ENCODE measurements at regions of chr20 and their contacts with region 1.

Region 1: GRCh38 chr20:47379433-47380150 is 23.1 kb upstream of the ZMYND8 start:
- DNase-seq: no peak
- H3K4me3 Mint-ChIP-seq: no peak overlapping the region
- H3K27ac Mint-ChIP-seq: peak overlapping the region; percentile 82
- H3K4me1 Mint-ChIP-seq: peaks cover 28% of the 10 kb centered on the region
- H3K27me3 Mint-ChIP-seq: no peaks in the 10 kb centered on the region

Region 2: DNA sequence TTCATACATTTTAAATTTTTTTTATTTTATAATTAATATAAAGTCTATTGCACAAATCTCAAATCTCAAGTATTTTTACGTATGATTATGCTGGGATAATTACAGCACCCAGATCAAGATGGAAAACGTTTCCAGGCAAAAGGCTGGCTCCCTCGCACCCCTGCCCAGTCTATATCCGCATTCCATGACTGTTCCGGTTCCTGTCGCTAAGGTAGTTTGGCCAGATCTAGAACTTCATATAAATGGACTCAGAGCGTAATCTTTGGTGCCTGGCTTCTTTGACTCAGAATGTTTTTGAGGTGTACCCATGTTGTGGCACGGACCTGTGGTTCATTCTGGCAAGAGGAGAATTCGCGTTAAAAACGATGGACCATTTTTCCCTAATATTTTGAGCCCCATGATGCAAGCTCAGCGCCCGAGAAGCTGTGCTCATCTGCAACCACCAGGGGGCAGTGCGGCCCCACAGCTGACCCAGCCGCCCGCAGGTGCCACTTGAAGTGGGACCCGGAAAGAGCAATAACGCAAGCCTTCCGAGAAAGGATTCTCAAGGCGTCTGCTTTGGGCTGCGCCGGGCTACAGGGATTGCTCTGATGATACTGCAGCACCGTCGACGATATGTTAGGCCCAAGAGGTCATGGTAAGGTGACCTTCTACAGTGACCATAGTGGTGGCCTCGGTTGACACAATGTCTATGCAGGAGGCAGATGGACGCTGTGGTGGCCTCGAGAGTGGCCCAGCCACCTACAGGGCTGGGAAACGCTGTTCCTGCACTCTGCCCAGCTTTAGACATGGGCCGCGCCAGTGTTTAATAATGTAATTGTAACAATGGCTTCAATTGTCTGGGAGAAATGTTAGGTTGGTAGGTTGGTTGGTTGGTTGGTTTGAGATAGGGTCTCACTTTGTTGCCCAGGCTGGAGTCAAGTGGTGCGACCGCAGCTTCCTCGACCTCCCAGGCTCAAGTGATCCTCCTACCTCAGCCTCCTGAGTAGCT is 183.2 kb before region 1 on chr20:
- intact Hi-C with region 1: loop called (anchors 1 kb)
- DNase-seq: peak; percentile 67
- H3K4me3 Mint-ChIP-seq: no peak overlapping the region
- H3K27ac Mint-ChIP-seq: no peak overlapping the region
- H3K4me1 Mint-ChIP-seq: peaks cover 16% of the 10 kb centered on the region
- H3K27me3 Mint-ChIP-seq: peaks cover 3% of the 10 kb centered on the region

Region 3: DNA sequence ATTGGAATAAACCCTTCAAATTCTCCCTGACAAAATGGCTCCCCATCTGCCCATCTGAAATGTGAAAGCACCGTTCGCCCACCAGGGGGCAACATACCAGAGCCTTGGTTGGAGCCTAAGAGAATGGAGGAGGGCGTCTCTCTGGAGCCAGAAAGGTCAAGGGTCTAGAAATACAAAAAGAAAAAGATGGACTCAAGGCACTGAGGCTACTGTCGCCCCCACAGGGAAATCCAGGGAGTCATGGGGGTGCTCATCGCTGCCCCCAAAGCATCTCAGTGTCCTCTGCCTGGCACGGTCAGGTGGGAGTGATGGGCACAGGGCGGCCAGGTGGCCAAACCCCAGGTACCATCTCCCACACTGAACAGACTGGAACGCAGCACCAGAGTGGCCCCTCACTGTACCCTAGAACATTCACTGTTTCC is 159.4 kb before region 1 on chr20:
- intact Hi-C with region 1: loop called (anchors 1 kb)
- DNase-seq: peak; percentile 5
- H3K4me3 Mint-ChIP-seq: no peak overlapping the region
- H3K27ac Mint-ChIP-seq: no peak overlapping the region
- H3K4me1 Mint-ChIP-seq: peaks cover 4% of the 10 kb centered on the region
- H3K27me3 Mint-ChIP-seq: no peaks in the 10 kb centered on the region

Region 4: GRCh38 chr20:47356526-47357295 is 22.9 kb before region 1 on chr20 and contains the start of gene ZMYND8:
- intact Hi-C with region 1: loop called (anchors 1 kb)
- DNase-seq: peak; percentile 96
- H3K4me3 Mint-ChIP-seq: peak within 1 kb of the TSS; percentile 92
- H3K27ac Mint-ChIP-seq: peak within 1 kb of the TSS; percentile 99
- H3K4me1 Mint-ChIP-seq: no peaks in the 10 kb centered on the region
- H3K27me3 Mint-ChIP-seq: no peaks in the 10 kb centered on the region
- total RNA-seq, gene ZMYND8: 42.6 and 43.3 TPM in 2 replicates